Cardiac septum (tissue), 1 donor: ENCODE measurements at regions of chr11 and their contacts with region 1.

Region 1: GRCh38 chr11:56624661-56625110 is 10.0 kb upstream of the OR5M1 start:
- DNase-seq: no peak

Region 2: DNA sequence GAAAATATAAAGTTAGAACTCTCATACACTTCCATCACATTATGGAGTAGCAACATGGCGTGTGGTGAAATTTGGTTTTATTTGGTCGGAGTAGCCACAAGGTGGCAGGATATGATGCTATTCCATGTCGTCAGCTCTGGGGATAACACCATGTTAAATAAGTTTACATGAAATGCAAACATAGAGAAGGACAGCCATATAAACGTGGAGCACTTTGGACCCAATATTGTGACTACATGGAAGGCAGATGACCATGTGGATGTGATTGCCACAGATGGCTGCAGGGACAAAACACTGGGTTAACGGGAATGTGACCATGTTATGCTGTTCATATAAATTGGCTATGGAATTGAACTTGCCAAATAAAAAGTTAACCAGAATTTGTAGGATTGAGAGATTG is 102.7 kb before region 1 on chr11:
- intact Hi-C with region 1: no loop called
- DNase-seq: no peak

Region 3: GRCh38 chr11:56783448-56784041 is 158.9 kb after region 1 on chr11:
- intact Hi-C with region 1: loop called (anchors 10 kb)
- DNase-seq: no peak